ENCODE measurements at regions of chr1 and their contacts with region 1.

Region 1: DNA sequence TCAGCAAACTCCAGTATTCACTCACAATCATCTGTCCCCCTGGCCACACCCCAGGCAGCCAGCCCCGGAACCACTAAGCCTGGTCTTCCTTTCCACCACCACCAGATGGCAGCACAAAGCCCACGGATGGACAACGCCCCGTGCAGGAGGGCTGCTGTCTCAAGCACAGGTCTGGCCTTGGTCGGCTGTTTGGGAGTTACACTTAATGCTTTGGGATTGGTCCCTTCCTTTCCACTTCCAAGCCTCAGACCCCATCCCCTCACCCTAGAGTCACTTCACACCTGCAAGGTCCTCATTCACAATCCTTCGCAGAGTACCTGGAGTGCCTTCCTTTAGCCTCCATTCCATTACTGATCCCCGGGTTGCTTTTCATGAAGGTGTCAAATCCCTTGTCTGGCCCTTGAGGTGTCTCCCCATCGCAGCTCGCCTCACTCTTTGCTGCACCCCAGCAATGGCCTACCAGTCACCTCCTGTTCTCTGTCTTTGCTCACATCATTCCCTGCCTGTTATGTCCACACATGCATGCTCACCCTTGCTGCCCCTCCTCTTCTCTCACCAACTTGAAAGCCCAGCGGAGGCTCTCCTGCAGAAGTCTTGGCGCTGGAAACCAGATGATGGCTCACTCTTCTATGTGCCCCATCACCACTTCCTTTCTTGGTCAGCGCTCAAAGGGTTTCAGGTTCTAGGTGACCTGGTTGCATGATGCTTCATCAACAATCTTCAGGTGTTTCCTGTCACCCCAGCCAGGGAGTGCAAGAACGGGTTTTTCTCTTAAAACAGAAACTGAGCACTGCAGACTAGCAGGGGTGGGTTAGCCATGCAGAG is 24.9 kb upstream of the KCNA2 start:
- DNase-seq: peak; percentile 73
- H3K4me3 ChIP-seq: no peak overlapping the region
- H3K27ac ChIP-seq: no peak overlapping the region
- H3K4me1 ChIP-seq: peaks cover 17% of the 10 kb centered on the region
- H3K27me3 ChIP-seq: peaks cover 38% of the 10 kb centered on the region
- CTCF ChIP-seq: peak; percentile 87

Region 2: DNA sequence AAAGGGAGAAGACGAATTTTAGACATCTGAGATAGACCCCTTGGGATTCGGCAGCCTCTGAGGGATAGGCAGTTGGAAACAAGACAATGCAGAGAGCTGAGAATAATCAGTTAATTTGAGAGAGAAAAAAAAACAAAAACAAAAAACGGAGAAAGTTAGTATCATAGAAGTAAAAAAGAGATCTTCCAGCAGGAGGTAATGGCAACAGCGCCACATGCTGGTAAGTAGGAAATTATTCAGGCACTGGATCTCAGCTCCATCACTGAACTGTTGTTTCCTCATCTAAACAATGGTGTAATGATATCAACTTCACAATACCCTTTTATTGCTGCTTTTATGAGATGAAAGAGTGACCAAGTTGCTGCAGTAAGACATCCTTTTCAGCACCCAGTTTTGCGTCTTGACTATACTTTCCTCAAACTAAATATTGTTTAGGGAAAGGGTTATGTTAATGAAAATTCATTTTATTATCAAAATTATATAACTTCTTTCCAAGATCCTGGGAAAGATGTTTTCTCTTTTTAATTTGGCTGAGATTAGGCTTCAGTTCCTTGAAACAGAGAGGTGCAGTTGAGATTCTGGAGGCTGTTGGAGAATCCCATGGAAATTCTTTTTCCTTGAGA is 135.1 kb after region 1 on chr1:
- intact Hi-C with region 1: loop called (anchors 5 kb)
- DNase-seq: no peak
- H3K4me3 ChIP-seq: no peak overlapping the region
- H3K27ac ChIP-seq: no peak overlapping the region
- H3K4me1 ChIP-seq: no peaks in the 10 kb centered on the region
- H3K27me3 ChIP-seq: peaks cover 82% of the 10 kb centered on the region
- CTCF ChIP-seq: peak; percentile 86

Region 3: DNA sequence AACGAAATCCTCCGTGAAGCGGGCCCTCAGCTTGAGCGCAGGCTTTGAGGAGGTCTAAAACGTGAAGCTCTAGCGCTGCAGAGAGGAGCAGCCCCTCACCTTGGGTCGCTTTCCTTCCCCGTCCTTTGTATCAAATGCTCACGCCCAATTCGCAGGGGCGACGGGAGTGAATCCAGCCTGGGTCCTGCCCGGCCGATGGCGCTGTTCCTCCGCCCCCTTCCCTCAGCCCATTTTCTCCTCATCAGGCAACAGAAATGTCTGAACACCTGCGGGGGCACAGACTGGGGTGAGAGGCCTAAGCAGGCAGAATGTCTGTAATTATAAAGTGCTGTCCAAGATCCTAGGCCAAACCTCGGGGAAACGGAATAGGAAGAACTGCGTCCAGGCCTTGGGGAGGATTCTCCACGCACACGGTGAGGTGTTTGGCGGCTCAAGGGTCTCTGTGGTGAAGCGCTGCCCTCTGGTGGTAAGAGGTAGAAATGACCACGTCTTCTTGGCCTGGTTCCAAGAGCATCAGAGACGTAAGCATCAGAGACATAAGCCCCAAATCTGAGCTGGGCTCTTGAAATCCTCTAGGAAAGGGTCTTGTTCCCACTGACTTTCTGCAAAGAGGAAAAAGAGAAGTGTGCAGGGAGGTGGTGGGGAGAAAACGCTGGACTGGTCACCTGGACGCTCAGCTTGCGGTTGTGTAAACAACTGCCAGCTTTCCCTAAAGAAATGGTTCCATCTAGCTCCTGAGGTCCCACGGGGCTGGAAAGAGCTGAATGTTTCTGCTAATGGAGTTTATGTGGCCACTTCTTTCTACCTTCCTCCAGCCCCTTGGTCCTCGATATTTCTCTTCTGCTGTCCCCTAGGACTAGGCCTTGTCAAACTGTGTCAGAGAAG is 149.8 kb after region 1 on chr1:
- intact Hi-C with region 1: loop called (anchors 5 kb)
- DNase-seq: peak; percentile 26
- H3K4me3 ChIP-seq: no peak overlapping the region
- H3K27ac ChIP-seq: no peak overlapping the region
- H3K4me1 ChIP-seq: peaks cover 4% of the 10 kb centered on the region
- H3K27me3 ChIP-seq: peaks cover 47% of the 10 kb centered on the region
- CTCF ChIP-seq: peak; percentile 83

Measured in left ventricle myocardium inferior (tissue), 1 donor.